Activated CD4-positive, alpha-beta T cell treated with anti-CD3 and anti-CD28 coated beads for 36 hours (primary cell): ENCODE measurements at regions of chr19 and their contacts with region 1.

Region 1: DNA sequence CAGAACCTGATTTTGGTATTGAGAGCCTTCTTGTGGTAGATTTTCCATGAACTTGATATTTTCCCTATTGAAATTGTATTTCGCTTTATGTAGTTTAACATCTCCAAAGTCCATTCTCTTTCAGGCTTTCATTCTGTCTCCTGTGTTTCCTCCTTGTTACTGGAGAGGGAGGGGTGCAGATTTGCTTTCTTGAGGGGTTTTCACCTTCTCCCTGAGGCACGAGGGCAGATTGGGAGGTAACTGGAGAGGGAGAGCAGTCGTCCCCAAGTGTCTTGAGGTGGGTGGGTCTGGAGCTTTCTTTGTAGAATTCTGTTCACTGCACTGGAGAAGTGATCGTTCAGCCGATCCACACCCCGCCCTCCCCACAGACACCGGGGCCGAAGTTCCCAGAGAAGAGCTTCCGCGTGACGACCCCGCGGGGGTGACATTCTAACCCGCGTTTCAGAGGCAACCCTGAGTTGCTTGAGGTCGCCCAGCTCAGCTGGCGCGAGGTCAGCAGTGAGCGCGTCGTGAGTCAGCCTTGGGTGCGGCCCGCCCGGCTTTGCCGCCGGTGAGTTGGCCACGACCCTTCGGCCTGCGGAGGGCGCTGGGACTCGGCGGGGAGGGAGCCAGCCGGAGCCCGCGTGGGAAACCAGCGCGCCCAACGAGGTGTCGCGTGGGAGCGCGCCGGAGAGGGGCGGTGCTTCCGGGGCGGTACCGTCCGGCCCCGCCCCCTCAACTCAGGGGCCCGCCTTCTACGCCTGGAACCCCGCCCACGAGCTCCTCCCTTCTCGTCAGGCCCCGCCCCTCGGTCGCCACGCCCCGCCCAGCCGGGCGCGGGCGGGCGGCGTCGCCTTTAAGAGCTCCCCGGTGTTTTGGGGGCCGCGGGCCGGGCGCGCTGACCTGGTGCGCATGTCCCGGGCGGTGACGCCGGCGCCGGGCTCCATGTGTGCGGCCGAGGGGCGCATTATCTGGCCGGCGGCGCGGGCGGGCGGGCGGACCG is at the start of gene GATAD2A:
- DNase-seq: peak; percentile 96
- ATAC-seq: peak; percentile 74
- H3K4me3 Mint-ChIP-seq: peak within 1 kb of the TSS; percentile 91
- H3K27ac Mint-ChIP-seq: peak within 1 kb of the TSS; percentile 95
- H3K4me1 Mint-ChIP-seq: peaks cover 69% of the 10 kb centered on the region
- H3K27me3 Mint-ChIP-seq: no peaks in the 10 kb centered on the region
- total RNA-seq, gene GATAD2A: 123 to 139 TPM

Region 2: DNA sequence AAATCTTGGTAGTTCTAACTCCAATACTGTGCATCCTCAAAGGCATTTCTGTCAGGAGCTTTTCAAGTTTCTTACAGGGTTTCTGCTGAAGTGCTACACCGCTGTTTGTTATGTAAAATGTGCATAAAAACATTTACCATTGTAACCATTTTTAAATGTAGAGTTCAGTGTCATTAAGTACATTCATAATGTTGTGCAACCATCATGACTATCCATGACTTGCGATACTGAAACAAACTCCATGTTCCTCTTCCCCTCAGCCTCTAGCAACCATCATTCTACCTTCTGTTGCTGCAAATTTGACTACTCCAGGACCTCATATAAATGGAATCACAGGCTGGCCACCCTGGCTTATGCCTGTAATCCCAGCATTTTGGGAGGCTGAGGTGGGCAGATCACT is 355.8 kb before region 1 on chr19:
- CTCF ChIA-PET with region 1: no interaction called
- POLR2A ChIA-PET with region 1: no interaction called
- intact Hi-C with region 1: no loop called
- DNase-seq: no peak
- ATAC-seq: no peak
- H3K4me3 Mint-ChIP-seq: no peak overlapping the region
- H3K27ac Mint-ChIP-seq: no peak overlapping the region
- H3K4me1 Mint-ChIP-seq: peaks cover 2% of the 10 kb centered on the region
- H3K27me3 Mint-ChIP-seq: no peaks in the 10 kb centered on the region

Region 3: DNA sequence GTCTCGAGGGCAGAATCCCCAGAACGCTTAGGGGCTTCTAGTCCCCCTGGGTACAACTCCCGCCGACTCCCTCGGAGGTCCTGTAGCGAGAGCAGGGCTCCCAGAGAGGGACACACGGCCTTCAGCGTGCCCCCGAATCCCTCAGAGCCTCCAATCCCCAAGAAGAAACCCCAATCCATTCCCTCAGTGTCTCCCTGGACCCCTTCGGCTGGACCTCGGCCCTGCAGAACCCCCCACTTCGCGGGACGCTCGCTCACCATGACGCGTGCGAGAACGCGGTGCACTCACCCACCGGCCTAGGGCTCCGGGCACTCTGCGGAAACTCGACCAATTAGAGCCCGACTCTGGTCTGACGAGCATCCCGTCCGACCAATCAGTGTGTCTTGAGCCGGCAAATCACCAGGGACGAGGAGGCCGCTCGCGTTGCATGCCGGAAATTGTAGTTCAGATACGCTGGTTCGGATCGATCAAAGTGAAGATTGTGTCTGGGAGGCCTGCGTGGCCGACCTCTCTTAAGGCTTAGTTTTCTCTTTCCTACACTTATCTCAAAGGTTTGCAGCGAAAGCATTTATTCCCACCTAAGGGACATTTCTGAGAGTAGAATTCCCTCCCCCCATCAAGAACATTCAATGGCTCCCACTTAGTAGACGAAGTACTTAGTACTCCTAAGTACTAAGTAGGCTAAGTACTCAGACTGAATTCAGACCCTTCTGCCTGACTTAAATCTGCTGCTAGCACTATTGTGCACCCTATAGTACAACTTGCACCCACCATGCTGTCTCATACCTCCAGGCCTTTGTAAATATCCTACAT is 266.8 kb before region 1 on chr19 and contains the start of gene TMEM161A:
- CTCF ChIA-PET with region 1: no interaction called
- POLR2A ChIA-PET with region 1: no interaction called
- intact Hi-C with region 1: loop called in 1 of 2 experiments (anchors 1 kb)
- DNase-seq: peak; percentile 98
- ATAC-seq: peak; percentile 100
- H3K4me3 Mint-ChIP-seq: peak within 1 kb of the TSS; percentile 93
- H3K27ac Mint-ChIP-seq: peak within 1 kb of the TSS; percentile 95
- H3K4me1 Mint-ChIP-seq: peaks cover 30% of the 10 kb centered on the region
- H3K27me3 Mint-ChIP-seq: no peaks in the 10 kb centered on the region
- total RNA-seq, gene TMEM161A: 26.8 to 31.9 TPM

Region 4: DNA sequence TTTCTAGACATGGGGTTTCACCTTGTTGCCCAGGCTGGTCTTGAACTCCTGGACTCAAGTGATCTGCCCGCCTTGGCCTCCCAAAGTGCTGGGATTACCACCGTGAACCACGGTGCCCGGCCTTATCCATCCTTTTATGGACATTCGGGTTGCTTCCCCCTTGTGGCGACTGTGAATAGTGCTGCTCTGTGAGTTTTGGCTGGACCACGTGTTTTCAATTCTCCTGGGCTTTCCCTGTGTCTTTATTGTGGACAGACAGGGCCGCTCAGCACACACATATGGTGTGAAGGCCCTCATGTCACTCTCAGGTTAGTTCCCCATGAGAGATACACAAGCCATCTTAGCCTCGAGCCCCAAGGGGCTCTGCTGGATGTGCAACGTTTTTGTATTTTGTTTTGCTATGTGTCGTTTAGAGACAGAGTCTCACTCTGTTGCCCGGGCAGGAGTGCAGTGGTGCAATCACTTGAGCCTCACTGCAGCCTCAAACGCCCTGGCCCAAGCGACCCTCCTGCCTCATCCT is 44.0 kb before region 1 on chr19:
- CTCF ChIA-PET with region 1: interaction called, 3 read pairs
- POLR2A ChIA-PET with region 1: interaction called, 3 read pairs
- intact Hi-C with region 1: loop called (anchors 1 to 5 kb)
- DNase-seq: peak; percentile 88
- ATAC-seq: peak; percentile 76
- H3K4me3 Mint-ChIP-seq: no peak overlapping the region
- H3K27ac Mint-ChIP-seq: peak overlapping the region; percentile 31
- H3K4me1 Mint-ChIP-seq: peaks cover 31% of the 10 kb centered on the region
- H3K27me3 Mint-ChIP-seq: no peaks in the 10 kb centered on the region

Region 5: GRCh38 chr19:19385108-19385899 is 19.9 kb before region 1 on chr19:
- CTCF ChIA-PET with region 1: interaction called, 6 read pairs
- POLR2A ChIA-PET with region 1: interaction called, 14 read pairs
- intact Hi-C with region 1: loop called (anchors 1 kb)
- DNase-seq: peak; percentile 100
- ATAC-seq: peak; percentile 96
- H3K4me3 Mint-ChIP-seq: peak overlapping the region; percentile 86
- H3K27ac Mint-ChIP-seq: peak overlapping the region; percentile 78
- H3K4me1 Mint-ChIP-seq: peaks cover 36% of the 10 kb centered on the region
- H3K27me3 Mint-ChIP-seq: no peaks in the 10 kb centered on the region

Region 6: DNA sequence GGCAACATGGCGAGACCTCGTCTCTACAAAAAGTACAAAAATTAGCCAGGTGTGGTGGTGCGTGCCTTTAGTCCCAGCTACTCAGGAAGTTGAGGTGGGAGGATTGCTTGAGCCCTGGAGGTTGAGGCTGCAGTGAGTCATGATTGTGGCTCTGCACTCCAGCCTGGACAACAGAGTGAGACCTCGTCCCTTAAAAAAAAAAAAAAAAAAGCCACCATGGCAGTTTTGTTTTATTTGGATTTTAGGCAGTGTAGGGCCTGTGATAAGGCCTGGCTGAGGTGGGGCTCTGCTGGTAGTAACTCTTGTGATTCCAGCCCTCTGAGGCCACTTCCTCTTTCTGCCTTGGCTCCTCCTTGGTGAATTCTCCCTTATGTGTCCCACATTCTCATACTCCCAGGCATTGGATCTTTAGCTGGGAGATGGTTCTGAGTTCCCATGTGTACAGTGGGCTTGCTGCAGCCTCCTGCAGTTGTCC is 39.5 kb after region 1 on chr19:
- CTCF ChIA-PET with region 1: interaction called, 3 read pairs
- POLR2A ChIA-PET with region 1: no interaction called
- intact Hi-C with region 1: loop called (anchors 2 kb)
- DNase-seq: peak; percentile 29
- ATAC-seq: peak; percentile 10
- H3K4me3 Mint-ChIP-seq: peak overlapping the region; percentile 7
- H3K27ac Mint-ChIP-seq: peak overlapping the region; percentile 85
- H3K4me1 Mint-ChIP-seq: peaks cover 73% of the 10 kb centered on the region
- H3K27me3 Mint-ChIP-seq: no peaks in the 10 kb centered on the region

Region 7: DNA sequence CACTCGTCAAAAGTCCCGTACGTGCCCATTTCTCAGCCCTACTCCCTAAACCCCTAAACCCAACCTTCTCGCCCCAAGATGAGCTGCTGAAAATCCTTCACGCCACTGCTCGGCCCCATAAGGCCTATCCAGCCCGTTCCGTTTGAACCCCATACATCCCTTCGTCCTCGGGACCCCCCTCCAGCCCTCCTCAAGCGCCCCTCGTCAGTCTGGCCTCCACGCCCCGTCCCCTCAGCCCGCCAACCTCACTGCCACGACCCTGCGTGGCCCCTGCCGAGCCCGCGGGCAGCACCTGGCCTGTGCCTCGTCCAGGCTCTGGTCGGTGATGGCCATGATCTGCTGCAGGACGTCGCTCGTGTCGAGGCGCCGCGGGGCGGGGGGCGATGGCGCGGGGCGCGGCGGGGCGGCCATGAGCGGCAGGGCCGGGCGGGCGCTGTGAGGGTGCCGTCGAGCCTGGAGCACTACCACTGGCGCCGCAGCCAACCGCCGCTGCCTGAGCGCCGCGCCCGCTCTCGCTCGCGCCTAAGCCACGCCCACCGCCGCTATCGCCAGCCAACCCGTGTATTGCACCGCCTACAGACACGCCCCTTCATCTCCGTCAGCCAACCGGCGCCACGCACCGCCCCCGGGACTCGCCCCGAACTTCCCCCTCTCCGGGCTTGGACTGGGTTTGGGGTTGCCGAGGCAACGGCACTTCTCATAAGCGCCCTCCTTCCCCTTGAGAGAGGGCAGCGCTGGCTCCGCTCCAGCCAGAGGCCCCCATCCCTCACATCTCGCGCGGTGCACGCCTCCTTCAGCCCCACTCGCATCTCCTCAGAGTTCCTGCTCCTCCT is 213.3 kb after region 1 on chr19 and contains the start of gene PBX4:
- CTCF ChIA-PET with region 1: interaction called, 3 read pairs
- POLR2A ChIA-PET with region 1: no interaction called
- intact Hi-C with region 1: loop called in 1 of 2 experiments (anchors 1 kb)
- DNase-seq: peak; percentile 99
- ATAC-seq: peak; percentile 93
- H3K4me3 Mint-ChIP-seq: peak within 1 kb of the TSS; percentile 91
- H3K27ac Mint-ChIP-seq: peak within 1 kb of the TSS; percentile 90
- H3K4me1 Mint-ChIP-seq: peaks cover 46% of the 10 kb centered on the region
- H3K27me3 Mint-ChIP-seq: no peaks in the 10 kb centered on the region
- total RNA-seq, gene PBX4: 19.4 to 21.2 TPM